Esophagus squamous epithelium (tissue), 5 donors: ENCODE measurements at regions of chr11 and their contacts with region 1.

Region 1: GRCh38 chr11:126262216-126262615 is 6.5 kb downstream of the SRPRA start:
- DNase-seq: no peak
- H3K4me3 ChIP-seq: no peak overlapping the region
- H3K27ac ChIP-seq: no peak overlapping the region
- H3K4me1 ChIP-seq: peaks cover 0 to 10% (median 2%) of the 10 kb centered on the region in 3 donors
- H3K27me3 ChIP-seq: no peaks in the 10 kb centered on the region
- CTCF ChIP-seq: no peak
- POLR2A ChIP-seq: no peak

Region 2: DNA sequence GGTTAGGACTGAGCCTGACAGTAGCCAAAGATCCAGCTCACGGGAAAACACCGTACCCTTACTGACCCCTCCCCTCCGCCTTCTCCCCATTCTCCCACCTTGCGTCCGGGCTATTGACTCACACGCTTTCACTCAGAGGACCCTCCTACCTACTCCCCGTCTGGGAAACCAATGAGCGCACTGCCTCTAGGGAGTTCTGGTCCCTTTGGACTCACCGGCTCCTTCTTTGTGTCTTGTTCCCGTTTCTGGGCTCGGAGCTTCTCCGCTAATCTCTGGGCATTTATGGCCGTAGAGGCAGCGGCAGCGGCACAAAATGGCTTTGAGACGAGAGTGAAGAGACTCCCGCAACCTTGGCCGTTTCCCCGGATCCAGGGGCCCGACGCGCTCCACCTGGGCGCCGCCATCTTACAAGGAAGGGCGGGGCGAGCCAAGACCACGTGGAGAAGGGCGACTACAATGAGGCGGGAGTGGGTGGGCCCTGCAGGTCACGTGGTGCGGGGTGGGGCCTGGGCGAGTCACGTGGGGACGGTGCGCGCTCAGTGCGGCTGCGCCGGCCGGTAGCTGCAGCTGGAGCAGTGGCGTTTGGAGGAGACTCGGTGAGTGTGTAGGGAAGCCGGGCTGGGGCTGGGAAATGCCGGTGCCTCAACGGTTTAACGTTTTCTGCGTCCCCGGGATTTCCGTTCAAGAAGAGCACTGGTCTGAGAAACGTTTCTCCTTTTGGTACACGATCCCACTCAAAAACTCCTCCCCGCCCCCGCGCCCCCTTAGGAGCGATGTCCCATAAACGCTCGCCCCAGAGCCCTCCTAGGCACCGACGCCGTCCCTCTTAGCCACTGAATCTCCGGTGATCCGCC is 50.8 kb before region 1 on chr11 and contains the starts of genes FAM118B and RPUSD4:
- intact Hi-C with region 1: loop called (anchors 5 kb)
- DNase-seq: peak; percentile 98
- H3K4me3 ChIP-seq: peak within 1 kb of the TSS; percentile 67 to 78 (median 74)
- H3K27ac ChIP-seq: peak within 1 kb of the TSS; percentile 57 to 81 (median 75)
- H3K4me1 ChIP-seq: peaks cover 11 to 46% (median 26%) of the 10 kb centered on the region in 3 donors
- H3K27me3 ChIP-seq: no peaks in the 10 kb centered on the region
- CTCF ChIP-seq: peak in 1 of 6 experiments; percentile 31
- POLR2A ChIP-seq: peak in 3 of 4 donors; percentile 72 to 81 (median 74)
- total RNA-seq, gene FAM118B: 6.5 to 18.5 (median 13.6) TPM
- total RNA-seq, gene RPUSD4: 11.7 to 28.6 (median 18.4) TPM